Dorsolateral prefrontal cortex (tissue), 120 donors: ENCODE measurements at regions of chr11 and their contacts with region 1.

Region 1: GRCh38 chr11:2732261-2732939 is 32.6 kb upstream of the KCNQ1OT1 start:
- DNase-seq: peak in 9 of 10 donors; percentile 67 to 86 (median 81)
- H3K4me3 ChIP-seq: no peak overlapping the region
- H3K27ac ChIP-seq: peak overlapping the region in 58 of 59 donors; percentile 47 to 100 (median 96)
- H3K27me3 ChIP-seq: no peaks in the 10 kb centered on the region
- CTCF ChIP-seq: peak in 2 of 56 donors; percentile 21 to 23

Region 2: DNA sequence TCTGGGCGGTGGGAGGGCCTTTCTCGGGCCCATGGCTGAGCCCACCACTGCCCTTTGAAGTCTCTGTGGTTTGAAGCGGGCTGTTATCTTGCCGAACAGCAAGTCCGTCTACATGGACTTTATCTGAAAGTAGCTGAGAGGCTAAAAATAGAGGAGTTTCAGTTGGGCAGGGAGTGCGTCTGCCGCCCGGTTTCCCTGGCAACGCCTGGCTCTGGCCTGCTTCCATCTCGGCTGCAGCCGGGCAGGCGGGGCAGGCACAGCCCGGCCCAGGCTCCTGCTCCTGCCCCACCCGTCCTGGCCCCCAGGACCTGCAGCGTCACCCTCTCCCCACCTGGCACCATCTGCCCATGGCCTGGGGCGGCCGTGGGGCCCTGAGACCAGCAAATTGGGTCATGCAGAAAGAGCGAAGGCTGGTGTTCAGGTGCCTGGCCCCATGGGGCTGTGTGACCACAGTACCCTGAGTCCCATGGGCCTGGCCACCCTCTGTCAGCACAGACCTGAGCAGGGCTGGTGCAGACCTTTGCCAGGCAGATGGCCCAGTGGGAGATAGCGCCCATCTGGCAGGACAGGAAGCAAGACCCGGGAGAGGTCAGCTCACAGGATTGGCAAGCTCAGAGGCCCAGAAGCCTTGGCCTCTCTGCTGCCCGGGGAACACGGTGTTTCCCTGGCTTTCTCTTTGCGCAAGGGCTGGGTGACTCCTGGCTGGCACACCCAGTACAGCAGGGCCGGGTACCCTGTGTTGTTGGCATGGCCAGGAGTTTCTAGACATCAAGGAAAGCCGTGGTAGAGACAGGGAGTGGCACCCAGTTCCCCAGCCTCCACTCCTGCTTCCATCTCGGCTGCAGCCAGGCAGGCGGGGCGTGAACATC is 46.5 kb after region 1 on chr11:
- intact Hi-C with region 1: loop called in 1 of 2 experiments (anchors 2 kb)
- DNase-seq: peak; percentile 72 to 92 (median 81)
- H3K4me3 ChIP-seq: peak overlapping the region in 44 of 59 donors; percentile 1 to 56 (median 28)
- H3K27ac ChIP-seq: peak overlapping the region; percentile 51 to 95 (median 87)
- H3K27me3 ChIP-seq: no peaks in the 10 kb centered on the region
- CTCF ChIP-seq: peak in 7 of 56 donors; percentile 11 to 44 (median 26)

Region 3: DNA sequence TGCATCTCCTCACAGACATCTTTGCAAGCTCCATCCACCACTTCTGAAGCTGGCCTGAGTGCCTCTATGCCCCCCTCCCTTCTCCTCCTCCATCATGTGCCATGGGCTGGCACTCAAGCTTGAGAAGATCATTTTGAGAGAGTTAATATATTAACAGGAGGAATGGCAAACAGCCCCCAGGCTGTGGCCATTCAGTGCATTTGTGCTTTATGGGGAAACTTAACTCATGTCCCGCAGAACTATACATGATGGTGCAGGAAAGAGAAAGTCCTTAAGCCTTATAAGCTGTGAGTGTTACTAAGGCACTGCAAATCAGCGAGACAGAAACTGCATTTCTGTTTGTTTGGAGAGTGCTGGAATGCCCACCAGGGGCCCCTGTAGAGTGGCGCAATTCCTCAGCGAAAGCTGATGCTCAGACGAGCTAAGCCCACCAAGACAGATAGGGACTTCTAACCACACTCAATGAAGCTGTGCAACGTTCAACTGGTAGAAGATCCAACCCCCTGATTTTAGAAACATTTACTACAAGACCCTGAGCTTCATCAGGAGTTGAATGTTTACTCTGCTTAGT is 223.6 kb after region 1 on chr11:
- intact Hi-C with region 1: no loop called
- DNase-seq: no peak
- H3K4me3 ChIP-seq: no peak overlapping the region
- H3K27ac ChIP-seq: no peak overlapping the region
- H3K27me3 ChIP-seq: no peaks in the 10 kb centered on the region
- CTCF ChIP-seq: no peak